ENCODE measurements at regions of chr20 and their contacts with region 1.

Region 1: DNA sequence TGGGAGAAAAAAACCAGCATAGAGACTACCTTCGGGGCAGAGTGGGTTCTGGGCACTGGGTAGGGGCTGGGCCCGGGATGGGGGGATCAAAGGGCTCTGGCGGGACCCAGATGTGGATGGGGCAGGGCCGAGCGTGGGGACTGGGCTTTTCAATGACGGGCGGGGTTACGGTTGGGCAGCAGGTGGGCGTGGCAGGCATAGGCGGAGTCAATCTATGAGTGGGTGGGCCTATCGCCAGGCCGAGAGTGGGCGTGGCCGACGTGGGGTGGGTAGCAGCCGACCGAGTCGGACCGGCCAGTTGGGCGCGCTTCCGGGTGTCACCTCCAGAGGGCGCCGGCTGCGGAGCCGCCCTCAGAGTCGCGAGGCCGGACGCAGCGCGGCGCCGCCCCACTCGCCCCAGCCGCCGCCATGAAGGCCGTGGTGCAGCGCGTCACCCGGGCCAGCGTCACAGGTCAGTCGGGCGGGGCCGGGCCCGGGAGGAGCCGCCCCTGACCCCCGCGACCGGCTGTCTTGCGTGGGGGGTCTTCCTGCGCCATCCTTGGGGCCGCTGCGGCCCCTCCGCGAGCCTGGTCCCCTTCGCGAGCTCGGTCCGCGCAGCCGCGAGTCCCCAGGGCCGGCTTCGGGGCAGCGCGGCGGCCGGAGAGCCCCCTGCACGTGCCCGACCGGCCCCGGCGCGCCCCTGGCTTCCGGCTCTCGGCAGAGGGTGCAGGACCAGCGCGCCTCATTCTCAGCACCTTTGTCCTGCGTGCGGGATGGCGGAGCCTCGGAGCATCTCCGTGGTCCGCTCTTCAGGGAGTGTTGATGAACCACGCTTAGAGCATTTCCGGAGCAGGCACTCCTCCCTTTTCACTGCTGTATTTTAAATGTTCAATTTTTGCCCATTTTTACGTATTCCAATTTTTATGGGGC is at the start of gene DTD1:
- DNase-seq: peak; percentile 67 to 97
- H3K4me3 ChIP-seq: peak within 1 kb of the TSS; percentile 83 to 98
- H3K27ac ChIP-seq: peak within 1 kb of the TSS; percentile 75 to 83
- H3K4me1 ChIP-seq: peaks cover 0 to 15% of the 10 kb centered on the region in 2 donors
- H3K27me3 ChIP-seq: no peaks in the 10 kb centered on the region
- CTCF ChIP-seq: peak; percentile 65 to 67 (median 66)
- total RNA-seq, gene DTD1: 34.9 TPM

Region 2: DNA sequence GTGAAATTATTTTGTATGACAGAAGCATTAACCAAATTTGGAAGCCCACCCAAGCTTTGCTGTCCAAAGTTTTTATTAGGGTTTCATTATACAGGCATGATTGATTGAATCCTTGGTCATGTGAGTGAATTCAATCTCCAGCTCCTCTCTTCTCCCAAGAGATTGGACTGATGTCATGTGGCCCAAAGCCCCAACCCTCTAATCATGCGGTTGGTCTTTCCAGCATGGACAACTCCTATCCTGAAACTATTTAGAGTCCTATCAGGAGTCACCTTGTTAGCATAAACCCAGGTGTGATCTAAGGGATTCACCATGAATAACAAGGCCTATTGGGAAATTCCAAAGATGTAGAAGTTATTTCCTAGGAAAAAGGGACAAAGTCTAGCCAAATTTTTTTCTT is 110.1 kb before region 1 on chr20:
- intact Hi-C with region 1: no loop called
- DNase-seq: no peak
- H3K4me3 ChIP-seq: no peak overlapping the region
- H3K27ac ChIP-seq: no peak overlapping the region
- H3K4me1 ChIP-seq: no peaks in the 10 kb centered on the region
- H3K27me3 ChIP-seq: no peaks in the 10 kb centered on the region
- CTCF ChIP-seq: no peak

Region 3: DNA sequence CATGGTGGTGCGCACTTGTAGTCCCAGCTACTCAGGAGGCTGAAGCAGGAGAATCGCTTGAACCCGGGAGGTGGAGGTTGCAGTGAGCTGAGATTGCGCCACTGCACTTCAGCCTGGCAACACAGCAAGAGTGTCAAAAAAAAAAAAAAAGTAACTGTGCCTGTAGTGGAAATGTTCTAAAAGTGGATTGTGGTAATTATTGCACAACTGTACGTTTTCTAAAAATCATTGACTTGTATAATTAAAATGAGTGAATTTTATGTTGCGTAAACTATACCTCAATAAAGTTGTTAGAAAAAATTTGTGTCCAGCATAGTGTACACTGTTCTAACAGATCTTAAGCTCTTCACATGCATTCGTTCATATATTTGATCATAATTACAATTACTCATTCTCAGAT is 74.7 kb before region 1 on chr20:
- intact Hi-C with region 1: no loop called
- DNase-seq: no peak
- H3K4me3 ChIP-seq: no peak overlapping the region
- H3K27ac ChIP-seq: no peak overlapping the region
- H3K4me1 ChIP-seq: peaks cover 4 to 7% of the 10 kb centered on the region in 2 donors
- H3K27me3 ChIP-seq: no peaks in the 10 kb centered on the region
- CTCF ChIP-seq: no peak

Region 4: GRCh38 chr20:18566892-18567742 is 20.8 kb before region 1 on chr20 and contains the start of gene SMIM26:
- intact Hi-C with region 1: loop called (anchors 1 kb)
- DNase-seq: peak; percentile 43 to 96
- H3K4me3 ChIP-seq: peak within 1 kb of the TSS; percentile 73 to 86
- H3K27ac ChIP-seq: peak within 1 kb of the TSS; percentile 80 to 93
- H3K4me1 ChIP-seq: peaks cover 0 to 10% of the 10 kb centered on the region in 2 donors
- H3K27me3 ChIP-seq: no peaks in the 10 kb centered on the region
- CTCF ChIP-seq: no peak
- total RNA-seq, gene SMIM26: 67.7 TPM